ENCODE measurements at regions of chr21 and their contacts with region 1.

Region 1: DNA sequence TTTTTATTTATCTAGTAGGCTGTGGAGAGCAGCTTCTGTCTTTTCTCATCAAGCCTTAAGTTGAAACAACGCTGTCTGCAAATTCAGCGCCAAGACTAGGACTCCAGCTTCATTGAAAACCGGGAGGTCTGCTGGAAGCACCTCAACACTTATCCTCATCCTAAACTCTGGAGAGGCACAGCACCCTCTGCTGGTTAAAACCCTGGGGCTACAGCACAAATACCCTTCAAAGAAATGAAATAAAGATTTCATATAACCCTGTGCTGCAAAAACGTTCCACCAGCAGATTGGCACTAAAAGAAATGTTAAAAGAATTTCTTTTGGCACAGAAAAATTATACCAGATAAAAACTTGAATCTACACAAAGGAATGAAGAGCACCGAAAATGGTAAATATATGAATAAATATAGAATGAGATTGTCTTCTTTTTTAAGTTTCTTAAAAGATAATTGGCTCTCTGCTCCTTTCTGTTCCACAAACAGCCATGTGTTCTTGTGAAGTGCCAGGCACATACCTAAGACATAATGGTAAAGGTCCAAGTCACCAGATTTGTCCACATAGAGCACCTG is 227.7 kb upstream of the SAMSN1 start:
- DNase-seq: peak; percentile 72
- H3K4me3 Mint-ChIP-seq: no peak overlapping the region
- H3K27ac Mint-ChIP-seq: no peak overlapping the region
- H3K4me1 Mint-ChIP-seq: no peaks in the 10 kb centered on the region
- H3K27me3 Mint-ChIP-seq: no peaks in the 10 kb centered on the region
- CTCF ChIP-seq: peak; percentile 65

Region 2: GRCh38 chr21:14306151-14306907 is 467.5 kb before region 1 on chr21:
- CTCF ChIA-PET with region 1: interaction called, 3 read pairs
- POLR2A ChIA-PET with region 1: no interaction called
- intact Hi-C with region 1: loop called (anchors 5 kb)
- DNase-seq: peak; percentile 46
- H3K4me3 Mint-ChIP-seq: no peak overlapping the region
- H3K27ac Mint-ChIP-seq: no peak overlapping the region
- H3K4me1 Mint-ChIP-seq: peaks cover 8% of the 10 kb centered on the region
- H3K27me3 Mint-ChIP-seq: no peaks in the 10 kb centered on the region
- CTCF ChIP-seq: peak; percentile 55

Region 3: DNA sequence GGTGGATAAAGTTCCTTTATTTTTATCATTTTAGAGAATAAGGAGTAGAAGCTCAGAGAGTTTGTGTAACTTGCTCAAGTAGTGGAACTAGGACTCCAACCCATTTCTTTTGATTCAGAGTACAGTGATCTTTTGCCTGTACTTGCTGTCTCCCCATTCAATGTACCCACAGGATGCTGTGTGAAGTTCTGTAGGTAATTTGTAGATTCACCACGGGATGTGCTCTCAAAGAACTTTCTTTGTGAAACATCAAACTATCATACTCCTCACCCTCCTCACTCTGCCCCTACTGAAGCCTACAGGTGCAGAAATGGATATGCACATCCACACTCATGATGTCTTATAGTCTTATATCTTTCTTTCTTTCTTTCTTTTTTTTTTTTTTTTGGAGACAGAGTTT is 325.1 kb before region 1 on chr21:
- CTCF ChIA-PET with region 1: interaction called, 3 read pairs
- POLR2A ChIA-PET with region 1: no interaction called
- intact Hi-C with region 1: loop called (anchors 10 kb)
- DNase-seq: no peak
- H3K4me3 Mint-ChIP-seq: no peak overlapping the region
- H3K27ac Mint-ChIP-seq: no peak overlapping the region
- H3K4me1 Mint-ChIP-seq: no peaks in the 10 kb centered on the region
- H3K27me3 Mint-ChIP-seq: no peaks in the 10 kb centered on the region
- CTCF ChIP-seq: no peak

Region 4: DNA sequence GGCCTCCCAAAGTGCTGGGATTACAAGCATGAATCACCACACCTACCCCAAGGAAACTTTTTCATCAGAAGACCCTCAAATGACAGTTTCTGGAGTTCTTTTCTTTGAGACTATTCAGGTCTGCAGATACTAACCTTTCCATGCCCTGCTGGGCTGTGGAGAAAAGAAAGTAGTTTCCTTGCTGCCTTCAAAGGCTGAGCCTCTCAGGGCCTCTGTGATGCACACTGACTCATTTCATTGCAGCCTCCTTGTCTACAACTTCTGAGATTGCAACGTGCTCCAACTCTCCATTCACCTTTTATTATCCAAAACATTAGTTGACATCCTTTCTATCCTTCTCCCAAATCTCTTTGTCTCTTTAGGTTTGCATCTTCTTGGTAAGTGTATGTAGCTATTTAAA is 218.9 kb before region 1 on chr21:
- CTCF ChIA-PET with region 1: no interaction called
- POLR2A ChIA-PET with region 1: no interaction called
- intact Hi-C with region 1: no loop called
- DNase-seq: peak; percentile 35
- H3K4me3 Mint-ChIP-seq: no peak overlapping the region
- H3K27ac Mint-ChIP-seq: peak overlapping the region; percentile 17
- H3K4me1 Mint-ChIP-seq: peaks cover 16% of the 10 kb centered on the region
- H3K27me3 Mint-ChIP-seq: no peaks in the 10 kb centered on the region
- CTCF ChIP-seq: no peak